CD8-positive, alpha-beta T cell (primary cell): ENCODE measurements at regions of chr1 and their contacts with region 1.

Region 1: GRCh38 chr1:223102797-223103533 is 40.1 kb downstream of the TLR5 start:
- DNase-seq: no peak
- ATAC-seq: no peak
- H3K4me3 ChIP-seq: no peak overlapping the region
- H3K4me3 Mint-ChIP-seq: no peak overlapping the region
- H3K27ac ChIP-seq: no peak overlapping the region
- H3K27ac Mint-ChIP-seq: no peak overlapping the region
- H3K4me1 ChIP-seq: no peaks in the 10 kb centered on the region
- H3K4me1 Mint-ChIP-seq: no peaks in the 10 kb centered on the region
- H3K27me3 ChIP-seq: no peaks in the 10 kb centered on the region
- H3K27me3 Mint-ChIP-seq: peaks cover 8% of the 10 kb centered on the region
- CTCF ChIP-seq: no peak

Region 2: DNA sequence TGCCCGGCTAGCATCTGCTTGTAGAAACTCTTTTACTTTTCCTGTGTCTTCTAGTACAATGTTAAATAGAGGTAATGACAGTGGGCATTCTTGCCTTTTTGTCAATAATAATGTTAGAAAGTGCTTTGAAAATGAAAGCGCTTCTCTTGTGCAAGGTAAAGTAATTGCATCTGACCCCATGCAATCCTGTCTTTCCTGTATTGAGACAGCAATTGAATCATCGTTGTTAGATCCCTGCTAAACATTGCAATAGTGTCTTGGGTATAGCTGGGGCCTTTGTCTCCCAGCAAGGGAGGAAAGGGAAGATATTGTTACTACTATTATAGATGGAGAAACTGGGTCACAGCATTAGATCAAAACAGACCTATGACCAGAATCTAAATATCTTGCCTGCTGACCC is 40.8 kb before region 1 on chr1:
- CTCF ChIA-PET with region 1: no interaction called
- POLR2A ChIA-PET with region 1: no interaction called
- intact Hi-C with region 1: loop called in 1 of 2 experiments (anchors 1 kb)
- DNase-seq: no peak
- ATAC-seq: no peak
- H3K4me3 ChIP-seq: no peak overlapping the region
- H3K4me3 Mint-ChIP-seq: no peak overlapping the region
- H3K27ac ChIP-seq: no peak overlapping the region
- H3K27ac Mint-ChIP-seq: no peak overlapping the region
- H3K4me1 ChIP-seq: no peaks in the 10 kb centered on the region
- H3K4me1 Mint-ChIP-seq: no peaks in the 10 kb centered on the region
- H3K27me3 ChIP-seq: no peaks in the 10 kb centered on the region
- H3K27me3 Mint-ChIP-seq: peaks cover 1% of the 10 kb centered on the region
- CTCF ChIP-seq: no peak